Panc1 (cell line): ENCODE measurements at regions of chr1 and their contacts with region 1.

Region 1: DNA sequence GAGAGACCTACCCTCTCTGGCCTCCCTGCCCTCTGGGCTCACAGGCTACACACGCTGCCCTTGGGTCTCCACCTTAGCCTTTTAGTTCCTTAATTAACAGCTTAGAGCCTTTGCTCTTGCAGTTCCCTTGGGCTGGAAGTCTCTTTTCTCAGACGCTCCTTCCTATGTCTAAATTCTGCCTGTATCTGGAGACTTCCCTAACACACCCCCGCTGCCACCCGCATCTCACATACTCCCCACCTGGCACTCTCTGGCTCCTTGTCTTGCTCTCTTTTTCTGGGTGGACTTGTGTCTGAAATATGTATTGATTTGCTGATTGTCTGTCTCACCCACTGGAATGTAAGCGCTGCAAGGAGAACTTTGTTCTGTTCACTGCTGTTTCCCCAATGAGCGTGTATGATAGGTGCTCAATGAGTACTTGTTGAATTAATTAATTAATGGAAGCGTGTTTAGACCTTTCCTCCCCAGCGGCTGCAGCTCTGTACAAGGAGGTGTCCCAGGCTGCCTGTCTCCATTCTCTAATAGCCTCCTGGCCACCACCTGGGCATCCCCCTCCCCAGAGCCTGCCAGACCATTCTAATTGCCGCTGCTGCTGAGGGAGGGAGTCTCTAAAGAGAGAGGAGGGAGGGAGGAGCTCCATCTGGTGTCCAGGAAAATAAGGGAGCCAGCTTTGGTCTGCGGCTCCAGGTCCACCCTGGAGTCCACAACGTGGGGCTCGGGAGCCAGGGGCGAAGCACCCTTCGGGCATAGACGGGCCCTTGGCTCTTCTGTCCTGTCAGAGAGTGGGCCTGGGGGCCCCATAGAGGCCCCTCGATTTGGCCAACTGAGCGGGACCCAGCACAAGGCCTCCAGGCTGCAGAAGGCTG is 95.4 kb downstream of the RNF220 start:
- DNase-seq: no peak
- ATAC-seq: peak; percentile 73; the same call in 1 of the 2 replicates
- H3K4me3 ChIP-seq: no peak overlapping the region
- H3K27ac ChIP-seq: no peak overlapping the region
- H3K4me1 ChIP-seq: peaks cover 6% of the 10 kb centered on the region; the same call in 1 of the 2 replicates
- H3K27me3 ChIP-seq: no peaks in the 10 kb centered on the region
- CTCF ChIP-seq: no peak; the same call in 1 of the 2 replicates

Region 2: DNA sequence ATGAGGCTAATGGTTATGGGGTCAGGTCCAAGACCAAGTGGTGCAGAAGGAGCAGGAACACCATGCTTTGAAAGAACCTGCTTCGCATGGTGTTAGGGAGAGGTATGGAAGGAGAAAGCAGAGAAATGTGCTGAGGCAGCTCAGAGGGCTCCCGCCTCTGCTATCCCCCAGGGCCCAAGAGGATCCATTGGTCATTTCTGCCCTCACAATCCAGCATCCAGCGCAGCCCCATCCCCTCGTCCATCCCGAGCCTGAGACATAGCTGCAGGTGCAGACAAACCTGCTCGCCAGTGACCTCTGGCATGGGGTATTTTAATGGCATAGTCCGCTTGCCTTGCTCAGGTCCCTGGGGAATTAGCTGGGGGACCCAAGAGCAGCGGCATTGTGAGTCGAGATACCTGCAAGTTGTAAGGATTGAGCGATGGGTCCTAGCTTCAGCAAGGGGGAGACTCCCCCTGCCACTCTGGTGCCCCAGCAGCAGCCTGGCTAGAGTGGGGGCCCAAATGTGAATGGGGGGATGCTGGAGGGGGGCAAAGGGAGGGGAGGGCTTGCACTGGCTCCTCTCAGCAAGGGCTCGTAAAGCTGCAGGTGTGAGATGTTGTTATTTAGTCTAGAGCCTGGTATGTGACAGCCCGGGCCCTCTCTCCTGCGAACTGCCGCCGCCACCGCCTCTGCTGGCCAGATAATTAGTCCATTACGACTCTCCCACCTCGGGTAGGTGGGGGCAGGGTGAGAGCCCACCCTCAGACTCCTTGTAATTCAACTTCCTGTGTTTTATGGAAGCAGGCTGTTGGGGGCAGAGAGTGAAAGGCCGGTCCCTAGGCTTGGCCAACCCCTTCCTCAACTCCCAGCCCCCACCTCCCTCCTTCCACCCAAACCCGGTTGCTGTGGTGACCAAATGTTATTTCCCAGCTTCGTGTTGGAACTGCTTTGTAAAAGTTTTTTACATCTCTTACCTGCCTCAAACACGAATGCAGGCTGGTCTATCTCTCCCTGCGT is 23.5 kb after region 1 on chr1:
- CTCF ChIA-PET with region 1: no interaction called
- POLR2A ChIA-PET with region 1: interaction called, 11 read pairs
- in situ Hi-C with region 1: no loop called
- intact Hi-C with region 1: no loop called
- DNase-seq: no peak
- ATAC-seq: peak; percentile 28; the same call in 1 of the 2 replicates
- H3K4me3 ChIP-seq: no peak overlapping the region
- H3K27ac ChIP-seq: no peak overlapping the region
- H3K4me1 ChIP-seq: no peaks in the 10 kb centered on the region
- H3K27me3 ChIP-seq: no peaks in the 10 kb centered on the region
- CTCF ChIP-seq: no peak